GM12878 (cell line): ENCODE measurements at regions of chr17 and their contacts with region 1.

Region 1: GRCh38 chr17:7239091-7240027 is at the start of gene PHF23:
- DNase-seq: peak; percentile 97
- ATAC-seq: peak; percentile 69
- H3K4me3 ChIP-seq: peak within 1 kb of the TSS; percentile 96
- H3K27ac ChIP-seq: peak within 1 kb of the TSS; percentile 87
- H3K4me1 ChIP-seq: peaks cover 29% of the 10 kb centered on the region
- H3K27me3 ChIP-seq: no peaks in the 10 kb centered on the region
- CTCF ChIP-seq: no peak
- EP300 ChIP-seq: peak in 1 of 2 experiments; percentile 14; a peak in 1 of 4 replicates
- POLR2A ChIP-seq: peak; percentile 70
- RAD21 ChIP-seq: no peak
- polyA plus RNA-seq, gene PHF23: 8.2 to 17.7 TPM

Region 2: GRCh38 chr17:7214300-7215135 is 24.8 kb before region 1 on chr17:
- CTCF ChIA-PET with region 1: interaction called, 70 read pairs
- POLR2A ChIA-PET with region 1: interaction called, 60 read pairs
- RAD21 ChIA-PET with region 1: interaction called, 51 read pairs
- SMC1A ChIA-PET with region 1: interaction called, 34 read pairs
- in situ Hi-C with region 1: no loop called
- intact Hi-C with region 1: loop called (anchors 2 kb)
- DNase-seq: peak; percentile 89
- ATAC-seq: peak; percentile 91
- H3K4me3 ChIP-seq: peak overlapping the region; percentile 72
- H3K27ac ChIP-seq: no peak overlapping the region; the same call in 1 of the 2 replicates
- H3K4me1 ChIP-seq: peaks cover 18% of the 10 kb centered on the region
- H3K27me3 ChIP-seq: no peaks in the 10 kb centered on the region
- CTCF ChIP-seq: peak; percentile 56 to 59 (median 56); a peak in 5 of 6 replicates
- EP300 ChIP-seq: no peak
- POLR2A ChIP-seq: no peak
- RAD21 ChIP-seq: no peak

Region 3: GRCh38 chr17:7252176-7253043 is 13.1 kb after region 1 on chr17 and contains the start of gene ELP5:
- CTCF ChIA-PET with region 1: interaction called, 5 read pairs
- POLR2A ChIA-PET with region 1: interaction called, 99 read pairs
- RAD21 ChIA-PET with region 1: interaction called, 11 read pairs
- SMC1A ChIA-PET with region 1: interaction called, 26 read pairs
- in situ Hi-C with region 1: no loop called
- intact Hi-C with region 1: loop called (anchors 1 kb)
- DNase-seq: peak; percentile 82
- ATAC-seq: peak; percentile 76
- H3K4me3 ChIP-seq: peak within 1 kb of the TSS; percentile 90
- H3K27ac ChIP-seq: peak within 1 kb of the TSS; percentile 99
- H3K4me1 ChIP-seq: peaks cover 10% of the 10 kb centered on the region
- H3K27me3 ChIP-seq: no peaks in the 10 kb centered on the region
- CTCF ChIP-seq: peak; percentile 11 to 42 (median 37); a peak in 3 of 6 replicates
- EP300 ChIP-seq: no peak
- POLR2A ChIP-seq: peak; percentile 98
- RAD21 ChIP-seq: no peak
- polyA plus RNA-seq, gene ELP5: 81.8 to 94.7 TPM

Region 4: GRCh38 chr17:7306911-7307686 is 67.7 kb after region 1 on chr17 and contains the start of gene EIF5A:
- CTCF ChIA-PET with region 1: interaction called, 3 read pairs
- POLR2A ChIA-PET with region 1: interaction called, 4 read pairs
- RAD21 ChIA-PET with region 1: no interaction called
- SMC1A ChIA-PET with region 1: no interaction called
- in situ Hi-C with region 1: no loop called
- intact Hi-C with region 1: loop called (anchors 5 kb)
- DNase-seq: peak; percentile 100
- ATAC-seq: peak; percentile 82
- H3K4me3 ChIP-seq: peak within 1 kb of the TSS; percentile 99
- H3K27ac ChIP-seq: peak within 1 kb of the TSS; percentile 99
- H3K4me1 ChIP-seq: peaks cover 12% of the 10 kb centered on the region
- H3K27me3 ChIP-seq: no peaks in the 10 kb centered on the region
- CTCF ChIP-seq: no peak
- EP300 ChIP-seq: 0 out of 4 replicates have a peak, but pooled peaks of 1 of the 2 experiments have one; percentile 54
- POLR2A ChIP-seq: peak; percentile 84
- RAD21 ChIP-seq: no peak
- polyA plus RNA-seq, gene EIF5A: 26.5 to 85.5 TPM

Region 5: GRCh38 chr17:7329374-7329996 is 90.1 kb after region 1 on chr17:
- CTCF ChIA-PET with region 1: no interaction called
- POLR2A ChIA-PET with region 1: interaction called, 14 read pairs
- RAD21 ChIA-PET with region 1: interaction called, 3 read pairs
- SMC1A ChIA-PET with region 1: no interaction called
- in situ Hi-C with region 1: no loop called
- intact Hi-C with region 1: no loop called
- DNase-seq: peak; percentile 97
- ATAC-seq: peak; percentile 75
- H3K4me3 ChIP-seq: peak overlapping the region; percentile 99
- H3K27ac ChIP-seq: peak overlapping the region; percentile 94
- H3K4me1 ChIP-seq: peaks cover 27% of the 10 kb centered on the region
- H3K27me3 ChIP-seq: no peaks in the 10 kb centered on the region
- CTCF ChIP-seq: no peak
- EP300 ChIP-seq: 0 out of 4 replicates have a peak, but pooled peaks of 1 of the 2 experiments have one; percentile 25
- POLR2A ChIP-seq: peak; percentile 77
- RAD21 ChIP-seq: no peak

Region 6: GRCh38 chr17:7419819-7420610 is 180.7 kb after region 1 on chr17 and contains the start of gene SPEM1:
- CTCF ChIA-PET with region 1: no interaction called
- POLR2A ChIA-PET with region 1: no interaction called
- RAD21 ChIA-PET with region 1: no interaction called
- SMC1A ChIA-PET with region 1: no interaction called
- in situ Hi-C with region 1: no loop called
- intact Hi-C with region 1: no loop called
- DNase-seq: no peak
- ATAC-seq: no peak
- H3K4me3 ChIP-seq: no peak within 1 kb of the TSS
- H3K27ac ChIP-seq: no peak within 1 kb of the TSS
- H3K4me1 ChIP-seq: no peaks in the 10 kb centered on the region
- H3K27me3 ChIP-seq: no peaks in the 10 kb centered on the region; a peak in 1 of 4 replicates
- CTCF ChIP-seq: no peak
- EP300 ChIP-seq: no peak
- POLR2A ChIP-seq: no peak
- RAD21 ChIP-seq: no peak
- polyA plus RNA-seq, gene SPEM1: not detected